ENCODE measurements at regions of chr3 and their contacts with region 1.

Region 1: GRCh38 chr3:58463181-58463941 is 28.5 kb upstream of the KCTD6 start:
- DNase-seq: peak; percentile 36
- H3K4me3 ChIP-seq: no peak overlapping the region
- CTCF ChIP-seq: peak; percentile 82

Region 2: DNA sequence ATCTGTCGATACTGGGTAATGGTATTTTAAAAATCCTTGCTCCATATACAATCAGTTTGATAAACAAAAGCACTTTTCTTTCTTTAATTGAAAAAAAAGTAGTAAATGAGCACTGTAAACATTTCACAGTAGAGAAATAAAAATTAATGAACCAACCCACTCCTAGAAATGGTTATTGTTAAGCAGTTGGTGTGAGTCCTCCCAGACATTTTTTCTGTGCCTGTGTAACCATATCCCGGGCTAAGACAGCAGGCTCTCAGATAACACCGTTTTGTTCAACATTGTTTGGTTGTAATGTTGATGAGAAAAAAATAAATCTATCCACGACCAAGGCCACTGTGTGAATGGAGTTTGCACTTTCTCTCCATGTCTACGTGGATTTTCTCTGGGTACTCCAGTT is 88.1 kb before region 1 on chr3:
- CTCF ChIA-PET with region 1: no interaction called
- POLR2A ChIA-PET with region 1: no interaction called
- DNase-seq: no peak
- H3K4me3 ChIP-seq: no peak overlapping the region
- CTCF ChIP-seq: no peak

Region 3: DNA sequence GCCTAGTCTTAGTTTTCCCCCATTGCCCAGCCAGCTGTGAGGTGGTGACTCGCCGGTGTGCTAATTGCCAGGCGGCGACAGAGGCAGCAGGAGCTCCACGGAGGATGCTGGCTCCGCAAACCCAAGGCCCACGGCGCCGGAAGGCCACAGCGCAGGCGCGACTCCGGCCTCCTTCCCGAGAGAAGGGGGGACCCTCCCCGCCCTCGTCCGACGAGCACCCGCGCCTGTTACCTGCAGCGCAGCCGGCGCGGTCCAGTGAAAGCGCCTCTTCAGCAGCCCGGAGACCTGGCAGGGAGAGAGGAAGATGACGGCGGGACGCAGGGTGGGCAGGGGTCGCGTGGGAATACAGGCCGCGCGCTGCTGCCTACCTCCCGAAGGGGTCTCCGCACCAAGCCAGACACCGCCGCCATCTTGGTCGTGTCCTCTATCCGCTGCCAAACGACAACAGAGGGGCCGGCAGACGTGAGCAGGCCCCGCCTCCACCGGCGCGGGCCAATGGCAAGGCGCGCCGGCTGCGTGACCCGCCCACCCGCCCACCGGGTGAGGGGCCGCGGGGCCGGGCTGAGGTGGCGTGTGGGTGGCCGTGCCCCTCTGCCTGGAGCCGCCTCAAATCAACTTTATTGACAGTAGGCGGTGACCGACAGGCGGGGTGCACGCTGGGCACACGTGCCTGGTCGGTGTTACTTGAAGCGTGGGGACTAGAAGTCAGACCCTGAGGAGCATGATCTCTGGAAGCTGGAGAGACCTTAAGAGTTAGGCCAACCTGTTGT is 29.8 kb before region 1 on chr3 and contains the start of gene PDHB:
- CTCF ChIA-PET with region 1: interaction called, 11 read pairs
- POLR2A ChIA-PET with region 1: no interaction called
- DNase-seq: no peak
- H3K4me3 ChIP-seq: peak within 1 kb of the TSS; percentile 94
- CTCF ChIP-seq: no peak

Region 4: GRCh38 chr3:58452176-58452575 is 11.2 kb before region 1 on chr3:
- CTCF ChIA-PET with region 1: interaction called, 13 read pairs
- POLR2A ChIA-PET with region 1: no interaction called
- DNase-seq: no peak
- H3K4me3 ChIP-seq: no peak overlapping the region
- CTCF ChIP-seq: no peak